ENCODE measurements at regions of chr14 and their contacts with region 1.

Region 1: GRCh38 chr14:24146978-24147760 is at the start of gene RNF31:
- DNase-seq: peak; percentile 98
- ATAC-seq: peak; percentile 89
- H3K4me3 Mint-ChIP-seq: peak within 1 kb of the TSS; percentile 99
- H3K27ac Mint-ChIP-seq: peak within 1 kb of the TSS; percentile 98
- H3K4me1 Mint-ChIP-seq: peaks cover 21% of the 10 kb centered on the region
- H3K27me3 Mint-ChIP-seq: no peaks in the 10 kb centered on the region
- CTCF ChIP-seq: no peak
- total RNA-seq, gene RNF31: 63.0 to 86.2 TPM (median 68.4 TPM) in 3 replicates

Region 2: DNA sequence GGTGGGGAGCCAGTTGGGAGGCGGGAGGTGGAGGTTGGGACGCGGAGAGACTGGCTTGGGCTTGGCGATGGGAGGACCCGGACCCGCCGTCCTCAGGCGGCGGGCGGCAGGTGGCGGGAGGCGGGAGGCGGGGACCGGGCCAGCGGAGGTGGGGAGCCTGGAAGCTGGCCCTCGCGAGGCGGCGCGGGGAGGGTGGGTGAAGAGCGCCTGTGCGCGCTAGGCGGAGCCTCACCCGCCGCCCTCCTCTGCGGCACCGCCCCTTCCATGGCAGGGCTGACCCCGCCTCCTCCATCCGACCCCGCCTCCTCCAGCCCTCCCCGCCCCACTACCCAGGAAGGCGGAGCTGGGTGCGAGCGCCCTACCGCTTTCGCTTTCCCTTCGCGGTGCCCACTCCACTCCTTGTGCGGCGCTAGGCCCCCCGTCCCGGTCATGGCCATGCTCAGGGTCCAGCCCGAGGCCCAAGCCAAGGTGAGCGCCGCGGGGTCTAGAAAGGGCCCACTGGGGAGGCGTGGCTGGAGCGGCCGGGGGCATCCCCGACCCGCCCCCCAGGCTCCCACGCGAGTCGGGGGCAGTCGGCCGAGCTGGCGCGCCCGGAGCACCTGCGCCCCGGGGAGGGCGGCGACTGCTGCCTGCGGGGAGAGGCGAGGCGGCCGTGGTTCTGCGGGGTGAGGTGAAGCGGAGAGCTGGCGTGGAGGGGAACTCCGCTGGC is 11.2 kb before region 1 on chr14 and contains the start of gene PSME1:
- CTCF ChIA-PET with region 1: interaction called, 16 read pairs
- POLR2A ChIA-PET with region 1: interaction called, 9 read pairs
- DNase-seq: peak; percentile 93
- ATAC-seq: peak; percentile 92
- H3K4me3 Mint-ChIP-seq: peak within 1 kb of the TSS; percentile 86
- H3K27ac Mint-ChIP-seq: peak within 1 kb of the TSS; percentile 88
- H3K4me1 Mint-ChIP-seq: peaks cover 33% of the 10 kb centered on the region
- H3K27me3 Mint-ChIP-seq: no peaks in the 10 kb centered on the region; the same call in 1 of the 2 replicates
- CTCF ChIP-seq: no peak
- total RNA-seq, gene PSME1: 76.8 to 99.1 TPM (median 98.8 TPM) in 3 replicates

Measured in WTC11 (cell line).